IMR-90 (cell line): ENCODE measurements at regions of chr20 and their contacts with region 1.

Region 1: DNA sequence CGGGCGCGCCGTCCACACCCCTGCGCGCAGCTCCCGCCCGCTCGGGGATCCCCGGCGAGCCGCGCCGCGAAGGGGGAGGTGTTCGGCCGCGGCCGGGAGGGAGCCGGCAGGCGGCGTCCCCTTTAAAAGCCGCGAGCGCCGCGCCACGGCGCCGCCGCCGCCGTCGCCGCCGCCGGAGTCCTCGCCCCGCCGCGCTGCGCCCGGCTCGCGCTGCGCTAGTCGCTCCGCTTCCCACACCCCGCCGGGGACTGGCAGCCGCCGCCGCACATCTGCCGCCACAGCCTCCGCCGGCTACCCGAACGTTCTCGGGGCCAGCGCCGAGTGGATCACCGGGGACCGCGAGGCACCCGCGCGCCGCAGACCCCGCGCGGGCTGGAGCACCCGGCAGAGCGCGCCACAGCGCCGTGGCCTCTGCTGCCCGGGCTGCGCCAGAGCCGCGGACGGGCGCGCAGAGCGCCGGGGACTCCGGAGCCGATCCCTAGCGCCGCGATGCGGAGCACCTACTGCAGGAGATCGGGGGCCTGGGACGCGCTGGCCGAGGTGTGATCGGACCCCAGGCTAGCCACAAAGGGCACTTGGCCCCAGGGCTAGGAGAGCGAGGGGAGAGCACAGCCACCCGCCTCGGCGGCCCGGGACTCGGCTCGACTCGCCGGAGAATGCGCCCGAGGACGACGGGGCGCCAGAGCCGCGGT is at the start of gene BMP2:
- DNase-seq: peak; percentile 50
- ATAC-seq: peak; percentile 82
- H3K4me3 ChIP-seq: peak within 1 kb of the TSS; percentile 77
- H3K27ac ChIP-seq: peak within 1 kb of the TSS; percentile 14; the same call in 1 of the 2 replicates
- H3K4me1 ChIP-seq: no peaks in the 10 kb centered on the region
- H3K27me3 ChIP-seq: peaks cover 16% of the 10 kb centered on the region
- CTCF ChIP-seq: no peak
- POLR2A ChIP-seq: no peak
- RAD21 ChIP-seq: no peak
- total RNA-seq, gene BMP2: 0.18 and 0.28 TPM in 2 replicates

Region 2: GRCh38 chr20:6178537-6178936 is 589.1 kb before region 1 on chr20:
- CTCF ChIA-PET with region 1: no interaction called
- POLR2A ChIA-PET with region 1: no interaction called
- dilution Hi-C with region 1: no loop called
- in situ Hi-C with region 1: no loop called
- intact Hi-C with region 1: loop called (anchors 2 kb)
- DNase-seq: peak; percentile 51
- ATAC-seq: peak; percentile 56
- H3K4me3 ChIP-seq: no peak overlapping the region
- H3K27ac ChIP-seq: no peak overlapping the region
- H3K4me1 ChIP-seq: no peaks in the 10 kb centered on the region
- H3K27me3 ChIP-seq: no peaks in the 10 kb centered on the region; the same call in 1 of the 2 replicates
- CTCF ChIP-seq: peak; percentile 61
- POLR2A ChIP-seq: no peak
- RAD21 ChIP-seq: peak; percentile 62

Region 3: DNA sequence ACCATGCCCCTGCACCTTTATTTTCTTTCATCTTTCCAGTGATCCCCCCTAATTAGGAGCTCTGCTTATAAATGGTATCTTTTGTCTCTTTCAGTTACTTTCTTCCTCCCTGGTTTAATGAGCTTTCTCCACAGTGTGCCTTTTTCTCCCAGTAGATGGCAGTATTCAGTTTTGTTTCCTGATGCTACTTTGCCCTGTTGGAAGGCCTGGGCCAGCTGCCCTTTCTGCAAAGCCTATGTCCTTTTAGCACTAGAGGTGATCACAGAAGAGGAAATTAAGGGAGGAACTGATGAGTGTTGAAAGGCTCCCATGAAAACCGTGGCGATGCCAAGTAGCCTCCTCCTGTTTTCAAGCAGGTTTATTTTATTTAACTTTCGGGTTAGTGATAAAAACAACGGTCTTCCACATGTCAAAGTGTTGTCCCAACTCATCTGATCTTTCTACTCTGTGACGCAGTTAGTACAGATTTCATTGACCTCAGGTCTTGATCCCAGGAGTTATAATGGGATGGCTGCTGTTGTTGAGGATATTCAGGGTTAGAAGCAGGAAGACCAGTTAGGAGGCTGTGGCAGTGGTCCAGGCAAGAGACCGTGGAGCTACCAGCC is 184.4 kb before region 1 on chr20:
- CTCF ChIA-PET with region 1: no interaction called
- POLR2A ChIA-PET with region 1: no interaction called
- dilution Hi-C with region 1: no loop called
- in situ Hi-C with region 1: no loop called
- intact Hi-C with region 1: loop called (anchors 1 kb)
- DNase-seq: peak; percentile 55
- ATAC-seq: peak; percentile 93
- H3K4me3 ChIP-seq: no peak overlapping the region
- H3K27ac ChIP-seq: no peak overlapping the region
- H3K4me1 ChIP-seq: peaks cover 6% of the 10 kb centered on the region
- H3K27me3 ChIP-seq: no peaks in the 10 kb centered on the region
- CTCF ChIP-seq: peak; percentile 71
- POLR2A ChIP-seq: no peak
- RAD21 ChIP-seq: peak; percentile 68

Region 4: GRCh38 chr20:7285918-7286556 is 518.4 kb after region 1 on chr20:
- CTCF ChIA-PET with region 1: no interaction called
- POLR2A ChIA-PET with region 1: no interaction called
- dilution Hi-C with region 1: no loop called
- in situ Hi-C with region 1: no loop called
- intact Hi-C with region 1: loop called (anchors 1 kb)
- DNase-seq: peak; percentile 75
- ATAC-seq: peak; percentile 80
- H3K4me3 ChIP-seq: no peak overlapping the region
- H3K27ac ChIP-seq: no peak overlapping the region
- H3K4me1 ChIP-seq: no peaks in the 10 kb centered on the region
- H3K27me3 ChIP-seq: no peaks in the 10 kb centered on the region
- CTCF ChIP-seq: peak; percentile 78
- POLR2A ChIP-seq: no peak
- RAD21 ChIP-seq: peak; percentile 66

Region 5: DNA sequence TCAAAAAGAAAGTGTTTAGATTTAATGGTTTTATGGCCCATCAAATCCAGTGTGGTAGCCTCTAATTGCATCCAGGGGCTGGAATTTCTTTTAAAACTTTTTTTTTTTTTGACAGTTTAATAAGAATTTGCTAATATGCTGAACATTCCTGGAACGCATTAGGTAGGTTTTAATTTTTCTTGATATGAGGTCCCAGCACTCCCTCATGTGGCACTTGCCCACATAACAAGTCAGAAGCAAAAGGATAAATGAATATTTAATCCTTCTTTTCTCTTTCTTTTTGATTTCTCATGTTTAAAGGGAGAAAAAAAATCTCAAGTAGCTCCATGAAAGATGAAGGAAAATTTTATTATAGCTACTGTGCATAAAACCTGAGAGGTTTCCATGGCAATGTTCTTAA is 1159.1 kb after region 1 on chr20:
- CTCF ChIA-PET with region 1: no interaction called
- POLR2A ChIA-PET with region 1: no interaction called
- dilution Hi-C with region 1: no loop called
- in situ Hi-C with region 1: no loop called
- intact Hi-C with region 1: loop called (anchors 5 kb)
- DNase-seq: peak; percentile 53
- ATAC-seq: peak; percentile 65
- H3K4me3 ChIP-seq: no peak overlapping the region
- H3K27ac ChIP-seq: no peak overlapping the region
- H3K4me1 ChIP-seq: no peaks in the 10 kb centered on the region
- H3K27me3 ChIP-seq: peaks cover 5% of the 10 kb centered on the region
- CTCF ChIP-seq: peak; percentile 59
- POLR2A ChIP-seq: no peak
- RAD21 ChIP-seq: peak; percentile 61